GM12878 (cell line): ENCODE measurements at regions of chr10 and their contacts with region 1.

Region 1: DNA sequence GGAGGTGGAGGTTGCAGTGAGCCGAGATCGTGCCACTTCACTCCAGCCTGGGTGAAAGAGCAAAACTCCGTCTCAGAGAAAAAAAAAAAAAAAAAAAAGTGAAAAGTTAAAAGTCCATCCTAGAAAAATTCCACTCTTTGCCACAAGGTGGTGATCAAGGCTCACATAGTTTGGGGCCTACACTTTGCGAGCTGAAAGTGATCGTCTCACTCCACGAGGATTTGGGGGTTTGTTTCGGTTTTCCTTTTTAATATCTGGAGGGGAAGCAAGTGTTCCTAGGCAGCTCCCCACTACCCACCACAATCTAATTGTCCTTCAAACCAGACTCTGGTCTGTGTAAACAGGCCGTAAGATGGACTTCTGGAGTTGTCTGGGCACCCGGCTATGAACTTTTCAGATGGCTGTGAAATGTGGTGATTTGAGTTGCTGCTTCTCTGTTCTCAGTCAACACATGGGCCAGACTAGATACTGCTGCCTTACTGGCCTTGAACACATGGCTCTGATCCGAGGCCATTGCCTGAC is 27.1 kb downstream of the PRLHR start:
- DNase-seq: peak; percentile 17
- ATAC-seq: peak; percentile 86
- H3K4me3 ChIP-seq: no peak overlapping the region
- H3K27ac ChIP-seq: no peak overlapping the region
- H3K4me1 ChIP-seq: no peaks in the 10 kb centered on the region
- H3K27me3 ChIP-seq: no peaks in the 10 kb centered on the region; a peak in 2 of 4 replicates
- CTCF ChIP-seq: peak; percentile 62 to 66 (median 64)
- EP300 ChIP-seq: no peak
- POLR2A ChIP-seq: no peak
- RAD21 ChIP-seq: peak; percentile 90

Region 2: GRCh38 chr10:118467200-118467599 is 101.2 kb before region 1 on chr10:
- CTCF ChIA-PET with region 1: no interaction called
- POLR2A ChIA-PET with region 1: no interaction called
- RAD21 ChIA-PET with region 1: no interaction called
- SMC1A ChIA-PET with region 1: no interaction called
- in situ Hi-C with region 1: no loop called
- intact Hi-C with region 1: no loop called
- DNase-seq: no peak
- ATAC-seq: no peak
- H3K4me3 ChIP-seq: no peak overlapping the region
- H3K27ac ChIP-seq: no peak overlapping the region
- H3K4me1 ChIP-seq: no peaks in the 10 kb centered on the region
- H3K27me3 ChIP-seq: peaks cover 0 to 3% of the 10 kb centered on the region in 2 experiments; a peak in 3 of 4 replicates
- CTCF ChIP-seq: no peak
- EP300 ChIP-seq: no peak
- POLR2A ChIP-seq: no peak
- RAD21 ChIP-seq: no peak

Region 3: DNA sequence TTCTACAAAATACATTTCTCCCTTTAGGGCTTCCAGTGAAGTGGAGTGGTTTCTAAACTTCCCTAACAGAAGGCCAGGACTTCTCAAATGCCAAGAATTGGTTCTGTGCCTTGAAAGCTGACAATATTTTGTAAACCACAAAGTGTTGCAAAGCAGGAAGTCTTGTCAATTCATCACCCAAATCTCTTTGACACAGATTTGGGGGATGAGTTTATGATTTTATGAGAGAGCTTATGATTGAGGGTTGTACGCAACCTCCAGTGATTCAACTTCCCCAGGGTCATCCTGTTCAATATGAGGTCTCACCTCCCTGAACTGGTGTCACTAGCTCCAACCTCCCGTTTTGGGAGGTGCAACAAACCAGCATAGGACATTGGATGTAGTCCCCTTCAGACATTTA is 56.7 kb before region 1 on chr10:
- CTCF ChIA-PET with region 1: no interaction called
- POLR2A ChIA-PET with region 1: no interaction called
- RAD21 ChIA-PET with region 1: no interaction called
- SMC1A ChIA-PET with region 1: no interaction called
- in situ Hi-C with region 1: no loop called
- intact Hi-C with region 1: no loop called
- DNase-seq: no peak
- ATAC-seq: no peak
- H3K4me3 ChIP-seq: no peak overlapping the region
- H3K27ac ChIP-seq: no peak overlapping the region
- H3K4me1 ChIP-seq: no peaks in the 10 kb centered on the region
- H3K27me3 ChIP-seq: 0 out of 4 replicates have a peak, but pooled peaks cover 0 to 1% of the 10 kb centered on the region in 2 experiments
- CTCF ChIP-seq: no peak
- EP300 ChIP-seq: no peak
- POLR2A ChIP-seq: no peak
- RAD21 ChIP-seq: no peak

Region 4: DNA sequence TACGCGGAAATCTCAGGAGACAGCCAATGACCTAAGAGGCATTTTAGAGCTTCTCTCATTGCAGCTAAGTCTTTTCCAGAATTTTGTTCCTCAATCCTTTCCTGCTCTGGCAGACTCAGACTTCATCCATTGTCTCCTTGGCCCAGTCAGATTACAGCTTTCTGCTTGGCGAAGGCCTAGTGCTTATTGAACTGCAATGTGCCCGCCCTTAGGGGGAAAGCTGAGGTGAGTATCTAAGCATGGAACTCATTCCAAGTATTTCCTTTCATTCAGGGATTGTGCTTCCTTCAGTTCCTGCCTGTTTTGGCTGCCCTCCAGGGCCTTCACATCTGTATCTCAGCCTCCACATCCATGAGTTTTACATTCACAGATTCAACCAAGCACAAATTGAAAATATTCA is 10.4 kb before region 1 on chr10:
- CTCF ChIA-PET with region 1: interaction called, 12 read pairs
- POLR2A ChIA-PET with region 1: no interaction called
- RAD21 ChIA-PET with region 1: no interaction called
- SMC1A ChIA-PET with region 1: interaction called, 4 read pairs
- in situ Hi-C with region 1: no loop called
- intact Hi-C with region 1: no loop called
- DNase-seq: no peak
- ATAC-seq: no peak
- H3K4me3 ChIP-seq: no peak overlapping the region
- H3K27ac ChIP-seq: no peak overlapping the region
- H3K4me1 ChIP-seq: no peaks in the 10 kb centered on the region
- H3K27me3 ChIP-seq: no peaks in the 10 kb centered on the region; a peak in 1 of 4 replicates
- CTCF ChIP-seq: no peak
- EP300 ChIP-seq: no peak
- POLR2A ChIP-seq: no peak
- RAD21 ChIP-seq: no peak

Region 5: DNA sequence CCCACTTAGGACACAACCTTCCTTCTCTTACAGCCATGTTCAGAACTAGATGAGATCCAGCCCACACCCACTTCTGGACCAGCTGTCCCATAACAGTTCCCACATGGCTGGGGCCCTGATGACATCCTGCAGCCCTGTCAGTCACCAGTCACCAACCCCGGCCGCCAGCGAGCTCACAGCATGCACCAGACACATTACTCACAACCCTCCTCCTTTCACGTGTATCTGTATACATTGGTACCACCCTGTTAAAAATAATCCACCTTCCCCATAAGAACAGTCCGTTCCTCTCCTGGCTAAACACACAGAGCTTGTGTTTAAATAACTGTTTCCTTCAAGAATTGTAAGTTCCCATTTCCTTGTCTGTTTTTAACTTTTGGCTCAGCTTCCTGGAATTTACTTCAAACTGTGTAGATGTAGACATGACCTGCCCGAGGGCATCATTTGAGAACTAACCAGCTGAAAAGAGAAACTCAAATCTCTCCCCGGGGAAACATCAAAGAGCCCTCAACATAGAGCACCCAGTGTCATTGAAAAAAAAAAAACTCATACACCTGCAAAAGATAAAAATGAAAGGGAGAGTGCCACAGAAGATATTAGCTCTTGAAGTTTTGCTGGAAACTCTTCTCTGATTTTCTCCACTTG is 53.0 kb after region 1 on chr10:
- CTCF ChIA-PET with region 1: no interaction called
- POLR2A ChIA-PET with region 1: no interaction called
- RAD21 ChIA-PET with region 1: no interaction called
- SMC1A ChIA-PET with region 1: no interaction called
- in situ Hi-C with region 1: no loop called
- intact Hi-C with region 1: no loop called
- DNase-seq: no peak
- ATAC-seq: no peak
- H3K4me3 ChIP-seq: no peak overlapping the region
- H3K27ac ChIP-seq: no peak overlapping the region
- H3K4me1 ChIP-seq: no peaks in the 10 kb centered on the region
- H3K27me3 ChIP-seq: no peaks in the 10 kb centered on the region; a peak in 2 of 4 replicates
- CTCF ChIP-seq: no peak
- EP300 ChIP-seq: no peak
- POLR2A ChIP-seq: no peak
- RAD21 ChIP-seq: no peak

Region 6: DNA sequence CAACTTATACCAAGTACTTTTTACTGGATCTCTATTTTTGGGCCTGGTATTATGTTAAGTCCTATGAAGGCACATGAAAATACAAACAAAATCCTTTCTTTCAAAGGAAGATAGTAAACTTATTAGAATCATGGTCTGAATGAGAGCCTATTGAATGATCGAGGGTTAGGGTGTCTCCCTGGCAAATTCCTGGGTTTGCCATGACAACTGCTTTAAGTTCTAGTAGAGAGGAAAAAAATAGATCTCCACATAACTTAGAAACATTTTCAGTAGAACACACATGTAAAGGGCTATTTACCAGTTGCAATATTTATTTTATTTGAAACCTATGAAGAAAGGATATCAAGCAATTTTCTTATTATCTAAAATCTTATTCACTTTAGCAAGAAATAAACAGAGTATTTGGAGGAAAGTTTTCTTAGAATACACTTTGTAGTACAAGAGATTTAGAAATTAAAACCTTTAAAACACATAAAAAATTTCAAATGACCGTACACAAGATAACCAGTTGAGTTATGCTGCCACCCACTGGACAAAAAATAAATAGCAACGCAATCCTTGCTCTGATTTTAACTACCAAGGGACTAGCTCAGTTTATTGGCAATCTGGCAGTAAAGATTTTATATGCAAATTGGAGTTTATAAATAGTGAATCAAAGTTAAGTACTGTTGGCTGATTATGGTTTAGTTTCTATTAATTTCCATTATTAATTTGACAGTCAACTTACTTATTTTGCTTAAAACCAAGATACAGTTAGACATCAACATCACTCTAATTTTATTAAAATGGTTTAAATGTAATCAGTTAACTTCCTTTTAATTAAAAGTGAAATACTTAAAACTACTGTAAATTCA is 152.5 kb after region 1 on chr10:
- CTCF ChIA-PET with region 1: interaction called, 72 read pairs
- POLR2A ChIA-PET with region 1: interaction called, 7 read pairs
- RAD21 ChIA-PET with region 1: interaction called, 49 read pairs
- SMC1A ChIA-PET with region 1: interaction called, 55 read pairs
- in situ Hi-C with region 1: loop called (anchors 5 kb)
- intact Hi-C with region 1: loop called (anchors 1 kb)
- DNase-seq: no peak
- ATAC-seq: peak; percentile 75
- H3K4me3 ChIP-seq: no peak overlapping the region
- H3K27ac ChIP-seq: no peak overlapping the region
- H3K4me1 ChIP-seq: no peaks in the 10 kb centered on the region
- H3K27me3 ChIP-seq: no peaks in the 10 kb centered on the region
- CTCF ChIP-seq: peak; percentile 64 to 76 (median 66)
- EP300 ChIP-seq: no peak
- POLR2A ChIP-seq: no peak
- RAD21 ChIP-seq: peak; percentile 67

Region 7: DNA sequence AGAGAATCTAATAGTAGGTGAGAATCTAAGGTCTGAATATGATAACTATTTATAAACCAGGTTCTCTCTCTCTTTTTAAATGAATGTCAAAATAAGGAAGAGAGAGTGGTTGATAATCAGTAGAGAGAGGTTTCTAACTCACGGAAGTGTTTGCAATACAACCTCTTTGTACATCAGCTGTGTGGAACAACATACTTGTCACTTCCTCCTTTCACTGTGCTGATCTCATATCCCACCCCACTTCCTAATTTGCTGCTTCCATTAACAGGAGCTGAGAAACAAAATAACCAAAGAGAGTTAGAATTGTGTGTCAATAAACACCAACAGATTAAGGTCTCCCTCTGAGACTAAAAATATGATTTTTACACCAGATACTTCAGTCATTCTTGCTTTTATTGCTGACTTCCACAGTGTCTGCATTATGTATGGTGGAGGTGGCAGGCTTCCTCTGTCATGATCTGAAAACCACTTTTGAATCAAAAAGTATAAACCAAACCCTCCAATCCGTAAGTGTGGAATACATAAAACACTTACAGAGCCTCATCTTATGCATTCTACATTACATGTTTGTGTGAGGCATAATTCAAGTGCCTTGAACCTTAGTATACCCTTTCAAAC is 161.4 kb after region 1 on chr10:
- CTCF ChIA-PET with region 1: interaction called, 72 read pairs
- POLR2A ChIA-PET with region 1: no interaction called
- RAD21 ChIA-PET with region 1: no interaction called
- SMC1A ChIA-PET with region 1: interaction called, 3 read pairs
- in situ Hi-C with region 1: loop called (anchors 5 kb)
- intact Hi-C with region 1: no loop called
- DNase-seq: peak; percentile 45
- ATAC-seq: peak; percentile 81
- H3K4me3 ChIP-seq: no peak overlapping the region
- H3K27ac ChIP-seq: peak overlapping the region; percentile 32; the same call in 1 of the 2 replicates
- H3K4me1 ChIP-seq: peaks cover 23% of the 10 kb centered on the region
- H3K27me3 ChIP-seq: no peaks in the 10 kb centered on the region
- CTCF ChIP-seq: no peak
- EP300 ChIP-seq: peak in 1 of 2 experiments; percentile 21; a peak in 1 of 4 replicates
- POLR2A ChIP-seq: no peak
- RAD21 ChIP-seq: no peak

Region 8: DNA sequence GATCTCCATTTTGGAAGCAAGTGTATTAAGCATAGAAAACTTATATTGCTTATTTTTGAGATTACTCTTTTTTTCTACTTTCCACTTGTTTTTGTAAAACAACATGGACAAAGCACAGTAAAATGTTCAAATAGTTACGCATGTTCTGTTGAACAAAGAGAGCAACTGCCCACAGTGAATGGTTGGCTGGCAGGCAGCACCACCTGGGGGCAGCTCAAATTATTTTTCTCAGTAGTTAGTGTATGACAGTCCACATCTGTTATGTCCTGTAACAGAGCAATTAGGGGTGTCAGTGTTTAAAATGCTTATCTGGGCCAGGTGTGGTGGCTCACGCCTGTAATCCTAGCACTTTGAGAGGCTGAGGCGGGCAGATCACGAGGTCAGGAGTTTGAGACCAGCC is 232.5 kb after region 1 on chr10:
- CTCF ChIA-PET with region 1: interaction called, 29 read pairs
- POLR2A ChIA-PET with region 1: no interaction called
- RAD21 ChIA-PET with region 1: interaction called, 6 read pairs
- SMC1A ChIA-PET with region 1: interaction called, 6 read pairs
- in situ Hi-C with region 1: loop called (anchors 10 kb)
- intact Hi-C with region 1: loop called (anchors 1 kb)
- DNase-seq: no peak
- ATAC-seq: peak; percentile 69
- H3K4me3 ChIP-seq: no peak overlapping the region
- H3K27ac ChIP-seq: no peak overlapping the region
- H3K4me1 ChIP-seq: no peaks in the 10 kb centered on the region
- H3K27me3 ChIP-seq: peaks cover 0 to 5% of the 10 kb centered on the region in 2 experiments; a peak in 2 of 4 replicates
- CTCF ChIP-seq: peak; percentile 28 to 62 (median 43); a peak in 4 of 6 replicates
- EP300 ChIP-seq: no peak
- POLR2A ChIP-seq: no peak
- RAD21 ChIP-seq: peak; percentile 64

Region 9: DNA sequence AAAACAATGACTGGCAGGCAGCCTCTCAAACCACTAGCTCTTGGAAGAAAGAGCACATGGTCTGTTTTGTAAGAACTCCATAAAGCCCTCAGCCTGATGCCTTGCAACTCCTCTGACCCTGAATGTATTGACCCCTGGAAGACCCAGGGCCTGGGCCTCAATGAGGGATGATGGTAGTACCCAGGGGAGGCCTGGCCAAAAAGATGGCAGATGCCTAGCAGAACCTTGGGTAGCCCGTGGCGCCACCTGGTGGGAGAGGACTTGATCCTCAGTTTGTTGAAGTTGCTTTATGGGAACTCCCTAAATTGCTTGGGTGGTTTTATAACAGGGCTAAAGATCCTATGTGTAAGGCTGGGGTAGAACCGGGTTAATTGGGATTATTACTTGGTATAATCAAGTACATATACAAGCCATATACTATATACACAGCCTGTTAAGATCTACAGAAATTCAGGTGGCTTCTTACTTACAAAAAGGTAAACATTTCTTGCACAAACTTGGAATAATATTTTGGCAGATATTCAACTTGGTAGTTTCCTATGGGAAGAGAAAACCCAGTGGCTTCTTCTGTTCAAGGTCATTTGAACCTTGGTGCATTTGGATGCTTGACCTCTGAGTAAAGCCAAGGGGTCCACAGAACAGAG is 282.2 kb after region 1 on chr10:
- CTCF ChIA-PET with region 1: interaction called, 32 read pairs
- POLR2A ChIA-PET with region 1: no interaction called
- RAD21 ChIA-PET with region 1: interaction called, 4 read pairs
- SMC1A ChIA-PET with region 1: interaction called, 17 read pairs
- in situ Hi-C with region 1: no loop called
- intact Hi-C with region 1: loop called (anchors 1 kb)
- DNase-seq: no peak
- ATAC-seq: peak; percentile 93
- H3K4me3 ChIP-seq: no peak overlapping the region
- H3K27ac ChIP-seq: no peak overlapping the region
- H3K4me1 ChIP-seq: peaks cover 3% of the 10 kb centered on the region; the same call in 1 of the 2 replicates
- H3K27me3 ChIP-seq: no peaks in the 10 kb centered on the region
- CTCF ChIP-seq: peak; percentile 63 to 71 (median 64)
- EP300 ChIP-seq: no peak
- POLR2A ChIP-seq: no peak
- RAD21 ChIP-seq: peak; percentile 61

Region 10: DNA sequence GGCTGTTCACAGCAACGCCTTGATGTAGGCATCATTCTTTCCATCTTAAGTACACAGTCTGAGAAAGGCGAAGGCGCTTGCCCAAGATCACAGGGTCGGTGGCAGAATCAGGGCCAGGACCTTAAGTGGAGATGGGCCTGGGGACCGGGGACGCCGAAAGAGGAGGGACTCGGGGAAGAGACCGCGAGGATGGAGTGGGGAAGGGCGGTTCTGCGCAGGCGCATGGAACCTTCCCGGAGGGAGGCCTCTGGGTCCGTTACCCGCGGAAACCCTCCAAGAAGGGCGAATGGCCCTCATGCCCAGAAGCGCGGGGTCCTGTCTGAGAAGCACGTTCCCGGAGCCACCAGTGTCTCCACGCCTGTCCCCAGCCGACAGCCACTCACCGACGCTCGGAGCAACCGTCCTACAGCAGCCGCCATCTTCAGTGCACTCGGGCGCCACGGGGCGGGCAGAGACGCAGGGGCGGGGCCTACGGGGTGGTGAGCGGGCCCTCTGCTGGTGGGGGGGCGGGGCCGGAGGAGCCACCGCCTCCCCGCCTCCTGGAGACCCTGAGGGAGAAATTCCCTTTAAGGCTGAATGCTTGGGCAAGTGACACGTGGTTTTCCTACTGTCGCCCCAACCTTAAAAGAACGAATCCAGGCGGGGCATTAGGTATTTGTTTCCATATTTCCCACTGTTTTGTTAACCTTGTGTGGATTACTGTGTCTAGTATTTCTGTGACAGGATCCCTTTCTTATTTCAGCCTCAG is 610.2 kb after region 1 on chr10 and contains the start of gene PRDX3:
- CTCF ChIA-PET with region 1: no interaction called
- POLR2A ChIA-PET with region 1: no interaction called
- RAD21 ChIA-PET with region 1: no interaction called
- SMC1A ChIA-PET with region 1: no interaction called
- in situ Hi-C with region 1: loop called (anchors 25 kb)
- intact Hi-C with region 1: no loop called
- DNase-seq: peak; percentile 72
- ATAC-seq: peak; percentile 98
- H3K4me3 ChIP-seq: peak within 1 kb of the TSS; percentile 100
- H3K27ac ChIP-seq: peak within 1 kb of the TSS; percentile 74
- H3K4me1 ChIP-seq: peaks cover 14% of the 10 kb centered on the region
- H3K27me3 ChIP-seq: no peaks in the 10 kb centered on the region
- CTCF ChIP-seq: peak in 1 of 3 experiments; percentile 6; a peak in 2 of 6 replicates
- EP300 ChIP-seq: no peak
- POLR2A ChIP-seq: peak; percentile 99
- RAD21 ChIP-seq: no peak
- polyA plus RNA-seq, gene PRDX3: 827 to 1,431 TPM